T-cell (primary cell): ENCODE measurements at regions of chr2 and their contacts with region 1.

Region 1: DNA sequence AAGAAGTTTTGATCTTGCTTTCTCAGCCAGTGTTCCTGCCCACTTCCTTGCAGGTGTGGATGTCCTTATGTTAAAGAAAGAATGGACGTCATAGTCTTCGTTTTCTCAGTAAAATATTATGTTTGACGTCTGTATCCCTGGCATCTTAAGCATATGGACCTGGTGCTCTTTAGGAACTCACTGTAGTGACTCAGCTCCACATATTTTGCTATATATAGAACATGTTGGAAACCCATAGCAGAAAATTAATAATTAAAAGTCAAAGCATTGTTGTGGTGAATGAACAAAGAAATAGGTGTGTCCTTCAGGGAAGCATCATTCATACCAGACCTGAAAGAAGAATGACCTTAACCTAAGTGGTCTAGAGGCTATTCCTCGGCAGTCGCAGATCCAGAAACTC is 196.1 kb downstream of the MCFD2 start:
- DNase-seq: no peak
- ATAC-seq: peak in 1 of 4 experiments; percentile 89
- H3K4me3 ChIP-seq: no peak overlapping the region
- H3K4me3 Mint-ChIP-seq: no peak overlapping the region
- H3K27ac ChIP-seq: no peak overlapping the region
- H3K27ac Mint-ChIP-seq: no peak overlapping the region
- H3K4me1 ChIP-seq: peaks cover 4 to 14% of the 10 kb centered on the region in 2 experiments
- H3K4me1 Mint-ChIP-seq: peaks cover 74 to 76% (median 75%) of the 10 kb centered on the region in 3 donors
- H3K27me3 ChIP-seq: no peaks in the 10 kb centered on the region
- H3K27me3 Mint-ChIP-seq: no peaks in the 10 kb centered on the region

Region 2: DNA sequence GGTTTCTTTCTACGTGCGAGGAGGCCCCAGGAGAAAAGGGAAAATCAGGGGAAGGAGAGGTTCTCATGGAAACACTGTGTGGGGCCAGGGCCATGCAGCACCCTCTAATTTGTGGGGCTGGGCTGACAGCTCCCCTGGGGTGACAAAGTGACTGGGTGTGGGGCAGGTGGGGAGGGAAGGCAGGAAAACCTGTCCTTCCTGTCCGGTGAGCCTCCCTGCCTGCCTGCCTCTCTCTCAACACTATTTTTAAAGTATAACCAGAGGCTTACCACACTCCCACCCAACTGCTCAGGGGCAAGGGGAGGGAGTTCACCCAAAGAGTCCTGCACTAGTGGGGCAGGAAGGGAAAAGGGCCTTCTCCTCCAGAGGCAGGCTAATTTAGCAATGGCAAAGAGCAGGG is 432.8 kb before region 1 on chr2:
- CTCF ChIA-PET with region 1: no interaction called
- POLR2A ChIA-PET with region 1: no interaction called
- DNase-seq: no peak
- ATAC-seq: no peak
- H3K4me3 ChIP-seq: no peak overlapping the region
- H3K4me3 Mint-ChIP-seq: no peak overlapping the region
- H3K27ac ChIP-seq: no peak overlapping the region
- H3K27ac Mint-ChIP-seq: no peak overlapping the region
- H3K4me1 ChIP-seq: no peaks in the 10 kb centered on the region
- H3K4me1 Mint-ChIP-seq: no peaks in the 10 kb centered on the region
- H3K27me3 ChIP-seq: peaks cover 0 to 6% of the 10 kb centered on the region in 2 experiments
- H3K27me3 Mint-ChIP-seq: peaks cover 0 to 4% of the 10 kb centered on the region in 2 donors

Region 3: DNA sequence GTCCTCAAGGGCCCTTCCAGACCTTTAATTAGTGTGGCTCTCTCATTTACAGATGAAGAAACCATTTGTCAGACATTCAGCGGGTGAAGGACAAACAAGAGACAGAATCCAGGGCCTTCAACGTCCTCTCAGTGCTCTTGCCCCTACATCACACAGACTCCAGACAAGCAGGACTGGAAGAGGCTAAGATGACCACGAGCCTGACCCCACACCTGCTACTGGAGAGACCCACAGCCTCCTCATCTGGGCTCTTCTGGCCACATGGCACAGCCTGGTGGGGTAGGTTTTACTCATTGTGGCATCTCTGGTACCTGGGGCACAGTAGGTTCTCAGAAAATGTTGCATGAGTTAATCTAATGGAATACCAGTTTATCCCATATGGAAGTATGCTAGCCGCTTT is 309.7 kb before region 1 on chr2:
- CTCF ChIA-PET with region 1: no interaction called
- POLR2A ChIA-PET with region 1: interaction called in 1 of 2 experiments, 10 read pairs
- DNase-seq: no peak
- ATAC-seq: no peak
- H3K4me3 ChIP-seq: no peak overlapping the region
- H3K4me3 Mint-ChIP-seq: no peak overlapping the region
- H3K27ac ChIP-seq: no peak overlapping the region
- H3K27ac Mint-ChIP-seq: no peak overlapping the region
- H3K4me1 ChIP-seq: no peaks in the 10 kb centered on the region
- H3K4me1 Mint-ChIP-seq: no peaks in the 10 kb centered on the region
- H3K27me3 ChIP-seq: no peaks in the 10 kb centered on the region
- H3K27me3 Mint-ChIP-seq: peaks cover 0 to 4% of the 10 kb centered on the region in 2 donors